Activated T-helper 1 cell treated with anti-CD3 and anti-CD28 coated beads, Interleukin-12 subunit alpha, Interleukin-12 subunit beta, Interleukin-2, Interleukin-4 antibody, amounts not matched to agents 30 ng/mL and 10 ng/mL and 1 ng/mL, durations not matched to agents 14 hours and 24 hours and 36 hours (primary cell): ENCODE measurements at regions of chrX and their contacts with region 1.

Region 1: GRCh38 chrX:30618156-30618765 is 35.0 kb upstream of the GK start:
- DNase-seq: no peak
- H3K4me3 Mint-ChIP-seq: no peak overlapping the region
- H3K27ac Mint-ChIP-seq: no peak overlapping the region
- H3K4me1 Mint-ChIP-seq: no peaks in the 10 kb centered on the region
- H3K27me3 Mint-ChIP-seq: peaks cover 3% of the 10 kb centered on the region

Region 2: GRCh38 chrX:30570505-30570904 is 47.8 kb before region 1 on chrX:
- intact Hi-C with region 1: loop called (anchors 2 kb)
- DNase-seq: no peak
- H3K4me3 Mint-ChIP-seq: no peak overlapping the region
- H3K27ac Mint-ChIP-seq: no peak overlapping the region
- H3K4me1 Mint-ChIP-seq: peaks cover 34% of the 10 kb centered on the region
- H3K27me3 Mint-ChIP-seq: no peaks in the 10 kb centered on the region

Region 3: GRCh38 chrX:30607155-30607554 is 11.1 kb before region 1 on chrX:
- intact Hi-C with region 1: no loop called
- DNase-seq: no peak
- H3K4me3 Mint-ChIP-seq: no peak overlapping the region
- H3K27ac Mint-ChIP-seq: no peak overlapping the region
- H3K4me1 Mint-ChIP-seq: no peaks in the 10 kb centered on the region
- H3K27me3 Mint-ChIP-seq: peaks cover 9% of the 10 kb centered on the region